Right ventricle myocardium inferior (tissue), 1 donor: ENCODE measurements at regions of chr15 and their contacts with region 1.

Region 1: DNA sequence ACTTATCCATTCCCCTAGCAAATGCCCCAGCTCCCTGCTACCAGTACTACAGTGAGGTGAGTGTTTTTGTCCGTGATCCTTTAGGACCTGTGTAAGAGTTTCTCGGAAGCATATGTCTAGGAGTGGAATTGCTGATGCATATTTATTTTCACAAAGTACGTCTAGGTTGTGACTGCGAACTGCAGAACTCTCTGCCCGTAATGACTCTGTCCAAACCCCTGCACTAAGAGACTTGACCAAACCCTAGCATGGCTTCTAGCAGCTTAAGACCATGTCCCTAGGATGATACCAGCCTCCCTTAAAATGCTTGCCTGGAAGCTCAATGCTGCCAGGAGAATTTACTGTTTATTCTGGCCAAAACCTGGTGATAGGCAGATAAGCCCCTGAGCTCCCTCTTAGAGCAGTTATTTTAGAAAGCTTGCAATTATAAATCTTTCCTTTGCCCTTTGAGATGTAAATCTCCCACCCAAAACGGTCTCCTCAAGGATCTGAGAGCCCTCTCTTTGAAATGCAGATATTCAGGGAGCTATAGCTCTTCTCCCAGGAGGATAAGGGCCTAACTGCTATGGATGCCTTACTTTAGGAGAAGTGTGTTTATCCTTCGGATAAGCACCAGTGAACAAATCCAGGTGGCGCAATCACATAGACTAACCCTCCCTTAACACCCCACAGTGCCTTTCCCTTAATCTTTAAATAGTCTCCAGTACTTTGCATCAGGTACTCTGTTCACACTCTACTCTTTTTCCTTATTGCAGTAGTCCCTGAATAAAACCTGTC is 14.7 kb upstream of the CA12 start:
- DNase-seq: no peak
- ATAC-seq: no peak

Region 2: DNA sequence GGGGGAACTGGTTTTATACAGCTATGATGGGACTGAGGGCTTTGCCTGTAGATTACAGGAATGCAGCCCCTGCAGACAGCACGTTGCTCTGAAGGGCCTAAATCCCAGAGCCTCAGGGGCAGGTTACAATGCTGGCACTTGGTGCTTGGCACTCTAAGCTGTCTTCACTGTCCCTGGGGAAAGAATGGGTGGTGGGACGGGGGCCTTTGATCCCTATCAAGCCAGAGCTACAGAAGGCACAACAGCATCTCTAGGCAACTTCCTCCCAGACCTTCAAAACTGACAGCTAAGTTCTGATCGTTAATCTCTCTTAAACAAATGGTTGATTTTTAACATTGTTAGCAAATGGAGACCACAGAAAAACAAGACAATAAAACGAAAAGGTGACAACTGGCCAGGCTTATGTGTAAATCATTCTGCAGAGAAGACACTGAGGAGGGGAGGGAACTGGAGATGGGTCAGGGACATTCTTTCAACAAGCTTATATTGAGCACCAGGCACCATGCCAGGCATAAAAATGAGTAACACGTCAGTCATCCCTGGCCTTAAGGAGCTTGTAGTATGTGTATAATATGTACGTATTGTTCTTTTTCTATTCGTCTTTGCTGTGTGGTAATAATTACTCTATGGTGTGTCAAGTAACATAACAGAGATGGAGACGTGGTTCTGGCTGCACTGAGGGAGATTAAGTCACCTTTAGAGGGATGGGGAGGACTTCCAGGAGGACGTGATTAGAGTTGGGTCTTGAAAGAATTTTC is 63.8 kb before region 1 on chr15:
- intact Hi-C with region 1: loop called (anchors 5 kb)
- DNase-seq: no peak
- ATAC-seq: no peak